CD4-positive, alpha-beta T cell (primary cell): ENCODE measurements at regions of chr15 and their contacts with region 1.

Region 1: GRCh38 chr15:79380755-79381497 is 51.2 kb upstream of the MINAR1 start:
- DNase-seq: peak; percentile 62 to 81 (median 71)
- ATAC-seq: peak; percentile 89
- H3K4me3 ChIP-seq: no peak overlapping the region
- H3K4me3 Mint-ChIP-seq: no peak overlapping the region
- H3K27ac ChIP-seq: no peak overlapping the region
- H3K27ac Mint-ChIP-seq: peak overlapping the region; percentile 13
- H3K4me1 ChIP-seq: no peaks in the 10 kb centered on the region
- H3K4me1 Mint-ChIP-seq: peaks cover 14% of the 10 kb centered on the region
- H3K27me3 ChIP-seq: no peaks in the 10 kb centered on the region
- H3K27me3 Mint-ChIP-seq: no peaks in the 10 kb centered on the region
- CTCF ChIP-seq: peak; percentile 85

Region 2: GRCh38 chr15:78625606-78626280 is 755.2 kb before region 1 on chr15:
- CTCF ChIA-PET with region 1: no interaction called
- POLR2A ChIA-PET with region 1: no interaction called
- intact Hi-C with region 1: no loop called
- DNase-seq: no peak
- ATAC-seq: no peak
- H3K4me3 ChIP-seq: no peak overlapping the region
- H3K4me3 Mint-ChIP-seq: no peak overlapping the region
- H3K27ac ChIP-seq: no peak overlapping the region
- H3K27ac Mint-ChIP-seq: no peak overlapping the region
- H3K4me1 ChIP-seq: no peaks in the 10 kb centered on the region
- H3K4me1 Mint-ChIP-seq: peaks cover 8% of the 10 kb centered on the region
- H3K27me3 ChIP-seq: peaks cover 13 to 14% of the 10 kb centered on the region in 2 experiments
- H3K27me3 Mint-ChIP-seq: peaks cover 39% of the 10 kb centered on the region
- CTCF ChIP-seq: no peak

Region 3: GRCh38 chr15:79322945-79323344 is 58.0 kb before region 1 on chr15:
- CTCF ChIA-PET with region 1: no interaction called
- POLR2A ChIA-PET with region 1: no interaction called
- intact Hi-C with region 1: no loop called
- DNase-seq: no peak
- ATAC-seq: no peak
- H3K4me3 ChIP-seq: no peak overlapping the region
- H3K4me3 Mint-ChIP-seq: no peak overlapping the region
- H3K27ac ChIP-seq: no peak overlapping the region
- H3K27ac Mint-ChIP-seq: no peak overlapping the region
- H3K4me1 ChIP-seq: no peaks in the 10 kb centered on the region
- H3K4me1 Mint-ChIP-seq: peaks cover 14% of the 10 kb centered on the region
- H3K27me3 ChIP-seq: no peaks in the 10 kb centered on the region
- H3K27me3 Mint-ChIP-seq: no peaks in the 10 kb centered on the region
- CTCF ChIP-seq: no peak

Region 4: DNA sequence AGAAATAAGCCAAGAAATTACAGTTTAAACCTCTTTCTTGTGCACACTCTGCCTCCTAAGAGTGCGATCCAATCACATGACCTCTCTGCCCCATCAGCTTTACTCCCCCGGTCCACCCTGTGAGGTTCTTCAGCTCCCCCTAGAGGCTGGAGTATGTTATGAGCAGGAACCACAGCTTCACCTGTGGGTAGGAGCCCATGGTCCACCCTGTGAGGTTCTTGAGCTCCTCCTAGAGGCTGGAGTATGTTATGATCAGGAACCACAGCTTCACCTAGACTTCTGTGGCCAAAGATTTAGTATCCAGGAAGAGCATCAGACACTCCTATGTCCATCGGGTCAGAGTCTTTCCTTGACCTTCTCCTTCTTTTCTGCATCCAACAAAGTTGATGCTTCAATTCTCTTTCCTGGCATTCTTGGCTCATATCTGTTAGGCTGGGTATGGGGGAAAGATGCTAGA is 215.2 kb after region 1 on chr15:
- CTCF ChIA-PET with region 1: no interaction called
- POLR2A ChIA-PET with region 1: no interaction called
- intact Hi-C with region 1: loop called in 1 of 2 experiments (anchors 5 kb)
- DNase-seq: peak in 6 of 14 experiments; percentile 2 to 72 (median 30)
- ATAC-seq: peak; percentile 78
- H3K4me3 ChIP-seq: no peak overlapping the region
- H3K4me3 Mint-ChIP-seq: no peak overlapping the region
- H3K27ac ChIP-seq: no peak overlapping the region
- H3K27ac Mint-ChIP-seq: no peak overlapping the region
- H3K4me1 ChIP-seq: no peaks in the 10 kb centered on the region
- H3K4me1 Mint-ChIP-seq: no peaks in the 10 kb centered on the region
- H3K27me3 ChIP-seq: no peaks in the 10 kb centered on the region
- H3K27me3 Mint-ChIP-seq: peaks cover 39% of the 10 kb centered on the region
- CTCF ChIP-seq: peak; percentile 42

Region 5: DNA sequence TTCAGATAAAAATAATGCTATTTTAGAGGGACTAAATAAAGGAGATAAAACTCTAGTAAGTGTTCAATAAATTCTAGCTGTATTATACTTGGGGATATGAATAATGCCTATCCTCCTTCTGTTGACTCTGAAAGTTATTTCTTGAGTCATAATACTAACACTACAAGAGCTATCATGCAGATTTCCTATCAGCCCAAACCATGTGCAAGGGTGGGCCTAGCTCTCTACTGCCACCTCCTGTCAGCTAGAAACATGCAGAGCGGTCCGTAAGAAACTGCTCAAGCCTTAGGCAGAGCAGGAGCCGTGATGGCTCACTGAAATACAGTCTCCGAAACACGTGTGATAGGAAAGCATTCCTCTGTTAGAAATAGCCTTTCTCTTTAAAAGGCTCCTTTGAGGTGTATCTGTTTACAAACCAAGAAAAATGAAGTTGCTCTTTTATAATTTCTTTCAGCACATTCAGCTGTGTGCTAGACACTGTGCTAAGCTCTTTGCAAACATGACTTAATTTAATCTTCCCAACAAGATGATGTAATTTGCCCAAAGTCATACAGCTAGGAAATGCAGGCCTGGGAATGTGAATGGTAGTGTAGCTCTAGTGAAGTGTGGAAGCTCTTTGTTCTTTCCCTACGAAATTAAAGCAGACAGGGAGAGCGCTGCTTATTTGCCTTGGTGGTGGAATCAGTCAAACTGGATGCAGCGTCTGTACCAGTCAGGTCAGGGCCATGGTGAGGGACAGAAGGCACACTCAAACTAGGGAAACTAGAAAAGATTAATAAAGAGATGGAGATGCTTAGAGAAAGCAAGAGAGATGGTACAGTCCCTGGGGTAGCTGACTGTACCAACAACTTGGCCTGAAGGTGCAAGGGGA is 472.8 kb after region 1 on chr15:
- CTCF ChIA-PET with region 1: interaction called, 17 read pairs
- POLR2A ChIA-PET with region 1: interaction called, 6 read pairs
- intact Hi-C with region 1: loop called (anchors 1 kb)
- DNase-seq: peak; percentile 35 to 79 (median 46)
- ATAC-seq: peak; percentile 99
- H3K4me3 ChIP-seq: no peak overlapping the region
- H3K4me3 Mint-ChIP-seq: no peak overlapping the region
- H3K27ac ChIP-seq: no peak overlapping the region
- H3K27ac Mint-ChIP-seq: peak overlapping the region; percentile 22
- H3K4me1 ChIP-seq: no peaks in the 10 kb centered on the region
- H3K4me1 Mint-ChIP-seq: peaks cover 24% of the 10 kb centered on the region
- H3K27me3 ChIP-seq: no peaks in the 10 kb centered on the region
- H3K27me3 Mint-ChIP-seq: no peaks in the 10 kb centered on the region
- CTCF ChIP-seq: peak; percentile 98

Region 6: DNA sequence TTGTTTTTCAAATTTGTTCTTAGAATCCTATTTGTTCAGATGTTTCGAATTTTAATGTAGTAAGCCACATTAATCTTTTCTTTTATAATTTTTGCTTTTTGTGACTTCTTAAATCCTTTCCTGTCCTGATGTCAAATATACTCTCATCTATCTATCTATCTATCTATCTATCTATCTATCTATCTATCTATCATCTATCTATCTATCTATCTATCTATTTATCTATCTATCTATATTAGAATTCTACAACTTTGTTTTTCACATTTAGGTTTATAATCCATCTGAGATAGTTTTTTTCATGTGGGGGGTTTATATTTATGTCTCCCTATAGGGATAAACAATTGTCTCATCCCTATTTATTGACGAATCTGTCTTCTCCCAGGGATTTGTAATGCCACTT is 839.0 kb after region 1 on chr15:
- CTCF ChIA-PET with region 1: no interaction called
- POLR2A ChIA-PET with region 1: no interaction called
- intact Hi-C with region 1: no loop called
- DNase-seq: no peak
- ATAC-seq: no peak
- H3K4me3 ChIP-seq: no peak overlapping the region
- H3K4me3 Mint-ChIP-seq: no peak overlapping the region
- H3K27ac ChIP-seq: no peak overlapping the region
- H3K27ac Mint-ChIP-seq: no peak overlapping the region
- H3K4me1 ChIP-seq: no peaks in the 10 kb centered on the region
- H3K4me1 Mint-ChIP-seq: no peaks in the 10 kb centered on the region
- H3K27me3 ChIP-seq: peaks cover 0 to 3% of the 10 kb centered on the region in 2 experiments
- H3K27me3 Mint-ChIP-seq: peaks cover 14% of the 10 kb centered on the region
- CTCF ChIP-seq: no peak